Mammary epithelial cell (primary cell): ENCODE measurements at regions of chrX and their contacts with region 1.

Region 1: DNA sequence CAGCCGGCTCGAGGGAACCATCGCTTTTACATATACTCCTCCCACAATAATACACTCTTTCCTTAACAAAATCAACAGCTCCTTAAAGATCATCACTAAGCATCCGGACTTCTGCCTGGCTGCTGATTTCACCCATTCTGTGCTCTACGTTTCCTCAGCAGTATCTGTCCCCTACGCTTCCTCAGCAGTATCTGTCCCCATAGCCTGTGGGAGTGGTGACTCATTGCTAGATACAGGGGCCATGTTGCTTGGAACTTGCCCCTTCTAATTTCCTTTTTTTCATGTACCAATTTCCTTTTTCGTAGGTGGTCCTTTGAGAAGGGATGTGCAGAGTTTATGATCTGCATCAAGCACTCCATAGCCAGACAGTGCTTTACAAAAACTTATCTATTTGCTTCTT is 18.6 kb downstream of the MAP3K15 start:
- DNase-seq: no peak
- H3K4me3 ChIP-seq: no peak overlapping the region
- H3K27ac ChIP-seq: no peak overlapping the region
- H3K4me1 ChIP-seq: no peaks in the 10 kb centered on the region
- H3K27me3 ChIP-seq: no peaks in the 10 kb centered on the region
- CTCF ChIP-seq: no peak

Region 2: GRCh38 chrX:17635231-17635630 is 1861.5 kb before region 1 on chrX:
- CTCF ChIA-PET with region 1: no interaction called
- dilution Hi-C with region 1: no loop called
- in situ Hi-C with region 1: no loop called
- intact Hi-C with region 1: no loop called
- DNase-seq: no peak
- H3K4me3 ChIP-seq: no peak overlapping the region
- H3K27ac ChIP-seq: no peak overlapping the region
- H3K4me1 ChIP-seq: peaks cover 6% of the 10 kb centered on the region
- H3K27me3 ChIP-seq: no peaks in the 10 kb centered on the region
- CTCF ChIP-seq: no peak

Region 3: DNA sequence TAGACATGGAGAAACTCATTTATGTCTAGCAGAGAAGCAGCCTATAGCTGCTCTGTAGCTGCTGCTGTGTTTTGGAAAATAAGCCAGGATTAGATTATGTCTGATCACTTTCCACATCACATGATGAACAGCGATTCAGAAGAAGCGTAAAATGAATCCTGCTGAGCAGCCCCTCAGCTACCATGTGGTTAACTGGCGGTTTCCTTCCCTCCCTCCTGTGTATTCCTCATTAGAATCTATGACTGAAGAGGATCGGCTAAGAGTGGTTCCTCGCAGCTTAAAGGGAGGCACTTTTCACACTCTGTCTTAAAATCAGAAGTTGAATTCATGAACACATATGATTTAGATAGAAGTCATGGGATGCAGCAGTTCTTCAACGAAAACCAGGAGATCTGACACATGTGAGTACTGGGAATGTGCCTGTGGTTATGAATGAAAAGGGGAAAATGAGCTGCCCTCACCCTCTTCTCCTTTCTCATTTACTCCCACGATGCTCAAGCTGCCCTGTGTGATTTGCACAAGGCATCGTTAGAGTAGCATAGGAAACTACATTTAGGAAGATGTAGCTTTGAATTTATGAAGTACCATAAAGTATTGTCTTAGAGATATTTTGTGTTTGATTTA is 789.2 kb before region 1 on chrX and contains the start of gene PPEF1:
- CTCF ChIA-PET with region 1: interaction called, 11 read pairs
- dilution Hi-C with region 1: no loop called
- in situ Hi-C with region 1: no loop called
- intact Hi-C with region 1: no loop called
- DNase-seq: no peak
- H3K4me3 ChIP-seq: no peak within 1 kb of the TSS
- H3K27ac ChIP-seq: no peak within 1 kb of the TSS
- H3K4me1 ChIP-seq: no peaks in the 10 kb centered on the region
- H3K27me3 ChIP-seq: no peaks in the 10 kb centered on the region
- CTCF ChIP-seq: no peak
- total RNA-seq, gene PPEF1: not detected

Region 4: GRCh38 chrX:18725310-18725943 is 771.3 kb before region 1 on chrX:
- CTCF ChIA-PET with region 1: no interaction called
- dilution Hi-C with region 1: no loop called
- in situ Hi-C with region 1: no loop called
- intact Hi-C with region 1: no loop called
- DNase-seq: no peak
- H3K4me3 ChIP-seq: no peak overlapping the region
- H3K27ac ChIP-seq: no peak overlapping the region
- H3K4me1 ChIP-seq: no peaks in the 10 kb centered on the region
- H3K27me3 ChIP-seq: no peaks in the 10 kb centered on the region
- CTCF ChIP-seq: no peak

Region 5: GRCh38 chrX:19554786-19555185 is 58.1 kb after region 1 on chrX:
- CTCF ChIA-PET with region 1: no interaction called
- dilution Hi-C with region 1: no loop called
- in situ Hi-C with region 1: no loop called
- intact Hi-C with region 1: no loop called
- DNase-seq: peak; percentile 45
- H3K4me3 ChIP-seq: no peak overlapping the region
- H3K27ac ChIP-seq: no peak overlapping the region
- H3K4me1 ChIP-seq: no peaks in the 10 kb centered on the region
- H3K27me3 ChIP-seq: no peaks in the 10 kb centered on the region
- CTCF ChIP-seq: no peak

Region 6: GRCh38 chrX:19887911-19888879 is 391.5 kb after region 1 on chrX:
- CTCF ChIA-PET with region 1: no interaction called
- dilution Hi-C with region 1: no loop called
- in situ Hi-C with region 1: no loop called
- intact Hi-C with region 1: no loop called
- DNase-seq: peak; percentile 75
- H3K4me3 ChIP-seq: peak overlapping the region; percentile 34 to 60 (median 46)
- H3K27ac ChIP-seq: peak overlapping the region; percentile 58
- H3K4me1 ChIP-seq: peaks cover 14% of the 10 kb centered on the region
- H3K27me3 ChIP-seq: no peaks in the 10 kb centered on the region
- CTCF ChIP-seq: peak; percentile 36 to 55